Activated B cell treated with CpG ODN at 0.5 μM for 24 hours (primary cell): ENCODE measurements at regions of chr19 and their contacts with region 1.

Region 1: DNA sequence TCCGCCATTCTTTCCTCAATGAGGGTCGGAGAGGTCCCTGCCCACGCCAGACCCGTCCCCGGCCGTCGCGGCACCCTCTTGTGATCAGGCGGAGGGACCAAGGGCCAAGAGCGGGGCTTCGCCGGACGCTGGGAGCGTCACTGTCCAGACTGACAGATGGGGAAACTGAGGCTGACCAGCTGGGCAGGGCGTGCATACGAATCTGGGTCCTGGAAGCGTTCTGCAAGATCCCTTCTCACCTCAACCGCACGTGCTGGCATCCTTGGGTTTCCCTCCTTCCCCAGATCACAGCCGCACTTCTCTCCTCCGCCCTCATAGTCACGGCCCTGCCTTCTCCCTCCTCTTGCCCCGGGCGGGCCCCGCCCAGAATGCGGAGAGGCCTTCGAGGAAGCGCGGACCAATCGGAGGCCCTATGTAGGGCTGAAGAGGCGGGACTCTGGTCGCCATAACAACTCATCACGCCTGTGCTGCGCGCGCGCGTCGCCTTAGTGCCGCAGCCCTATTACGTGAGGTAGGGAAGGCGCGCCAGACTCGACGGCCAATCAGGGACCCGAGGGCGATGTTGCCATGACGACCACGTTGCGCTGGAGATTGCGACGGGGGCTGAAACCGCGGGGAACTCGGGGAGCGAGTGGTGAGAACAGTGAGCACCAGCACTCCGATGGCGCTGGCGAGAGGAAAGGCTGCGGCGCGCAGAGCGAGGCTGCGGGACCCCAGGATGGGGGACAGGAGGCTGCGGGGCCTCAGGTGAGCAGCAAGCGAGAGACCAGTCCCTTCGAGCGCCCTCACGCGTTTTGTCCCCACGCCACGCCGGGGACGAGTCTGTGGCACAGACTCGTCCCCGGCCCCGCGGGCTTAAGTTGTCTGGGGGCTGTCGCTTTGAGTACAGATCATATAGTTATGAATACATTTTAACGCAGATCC is 5.7 kb downstream of the RNF225 start:
- DNase-seq: peak; percentile 96
- ATAC-seq: peak; percentile 96
- H3K4me3 Mint-ChIP-seq: peak overlapping the region; percentile 92
- H3K27ac Mint-ChIP-seq: peak overlapping the region; percentile 90
- H3K4me1 Mint-ChIP-seq: peaks cover 12% of the 10 kb centered on the region
- H3K27me3 Mint-ChIP-seq: peaks cover 7% of the 10 kb centered on the region
- CTCF ChIP-seq: no peak

Region 2: GRCh38 chr19:57279418-57280066 is 1121.6 kb before region 1 on chr19:
- CTCF ChIA-PET with region 1: no interaction called
- POLR2A ChIA-PET with region 1: interaction called, 11 read pairs
- intact Hi-C with region 1: no loop called
- DNase-seq: peak; percentile 62
- ATAC-seq: peak; percentile 72
- H3K4me3 Mint-ChIP-seq: no peak overlapping the region
- H3K27ac Mint-ChIP-seq: no peak overlapping the region
- H3K4me1 Mint-ChIP-seq: peaks cover 44% of the 10 kb centered on the region
- H3K27me3 Mint-ChIP-seq: no peaks in the 10 kb centered on the region
- CTCF ChIP-seq: no peak

Region 3: DNA sequence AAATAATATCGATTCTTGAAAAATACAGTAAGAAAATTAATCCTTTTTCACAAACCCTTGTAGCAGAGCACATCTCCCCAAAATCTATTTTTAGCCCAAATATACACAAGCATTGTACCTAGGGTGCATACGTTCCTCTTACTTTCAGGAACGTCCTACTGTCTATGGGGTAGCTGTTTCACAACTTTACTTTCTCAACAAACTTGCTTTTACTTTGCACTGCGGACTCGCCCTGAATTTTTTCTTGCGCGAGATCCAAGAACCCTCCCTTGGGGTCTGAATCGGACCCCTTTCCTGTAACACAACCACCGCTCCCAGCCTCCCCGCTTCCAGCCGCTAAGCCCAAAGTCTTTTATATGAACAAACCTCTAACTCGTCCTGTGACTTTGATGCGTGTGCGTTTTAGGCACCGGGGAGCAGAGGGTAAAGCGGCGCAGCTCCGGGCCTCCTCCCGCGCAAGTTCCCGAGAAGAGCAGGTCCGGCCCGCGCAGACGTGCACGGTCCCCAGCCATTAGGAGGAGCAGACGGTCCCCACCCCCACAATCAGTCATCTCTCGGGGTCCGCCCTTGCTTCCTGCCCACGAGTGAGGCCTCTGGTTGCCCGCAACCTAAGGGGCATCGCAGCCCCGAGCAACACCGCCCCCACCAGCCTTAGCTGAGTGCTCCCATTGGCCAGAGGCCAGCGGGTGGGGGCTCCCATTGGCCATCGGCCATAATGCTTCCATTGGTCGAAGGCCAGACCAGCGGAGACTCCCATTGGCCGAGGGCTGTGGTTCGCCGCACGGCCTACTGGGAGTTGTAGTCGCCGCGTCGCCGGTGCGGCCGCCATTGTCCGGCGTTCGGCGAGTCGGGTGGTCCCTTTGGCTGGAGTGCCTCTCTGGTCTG is 122.8 kb before region 1 on chr19 and contains the start of gene ZNF8:
- CTCF ChIA-PET with region 1: no interaction called
- POLR2A ChIA-PET with region 1: no interaction called
- intact Hi-C with region 1: loop called (anchors 1 kb)
- DNase-seq: peak; percentile 88
- ATAC-seq: peak; percentile 98
- H3K4me3 Mint-ChIP-seq: peak within 1 kb of the TSS; percentile 91
- H3K27ac Mint-ChIP-seq: peak within 1 kb of the TSS; percentile 95
- H3K4me1 Mint-ChIP-seq: peaks cover 44% of the 10 kb centered on the region
- H3K27me3 Mint-ChIP-seq: no peaks in the 10 kb centered on the region
- CTCF ChIP-seq: no peak
- total RNA-seq, gene ZNF8: 4.7 and 5.3 TPM in 2 replicates

Region 4: GRCh38 chr19:58311345-58311865 is 89.8 kb before region 1 on chr19:
- CTCF ChIA-PET with region 1: no interaction called
- POLR2A ChIA-PET with region 1: no interaction called
- intact Hi-C with region 1: no loop called
- DNase-seq: no peak
- ATAC-seq: no peak
- H3K4me3 Mint-ChIP-seq: no peak overlapping the region
- H3K27ac Mint-ChIP-seq: no peak overlapping the region
- H3K4me1 Mint-ChIP-seq: peaks cover 16% of the 10 kb centered on the region
- H3K27me3 Mint-ChIP-seq: no peaks in the 10 kb centered on the region
- CTCF ChIP-seq: no peak

Region 5: DNA sequence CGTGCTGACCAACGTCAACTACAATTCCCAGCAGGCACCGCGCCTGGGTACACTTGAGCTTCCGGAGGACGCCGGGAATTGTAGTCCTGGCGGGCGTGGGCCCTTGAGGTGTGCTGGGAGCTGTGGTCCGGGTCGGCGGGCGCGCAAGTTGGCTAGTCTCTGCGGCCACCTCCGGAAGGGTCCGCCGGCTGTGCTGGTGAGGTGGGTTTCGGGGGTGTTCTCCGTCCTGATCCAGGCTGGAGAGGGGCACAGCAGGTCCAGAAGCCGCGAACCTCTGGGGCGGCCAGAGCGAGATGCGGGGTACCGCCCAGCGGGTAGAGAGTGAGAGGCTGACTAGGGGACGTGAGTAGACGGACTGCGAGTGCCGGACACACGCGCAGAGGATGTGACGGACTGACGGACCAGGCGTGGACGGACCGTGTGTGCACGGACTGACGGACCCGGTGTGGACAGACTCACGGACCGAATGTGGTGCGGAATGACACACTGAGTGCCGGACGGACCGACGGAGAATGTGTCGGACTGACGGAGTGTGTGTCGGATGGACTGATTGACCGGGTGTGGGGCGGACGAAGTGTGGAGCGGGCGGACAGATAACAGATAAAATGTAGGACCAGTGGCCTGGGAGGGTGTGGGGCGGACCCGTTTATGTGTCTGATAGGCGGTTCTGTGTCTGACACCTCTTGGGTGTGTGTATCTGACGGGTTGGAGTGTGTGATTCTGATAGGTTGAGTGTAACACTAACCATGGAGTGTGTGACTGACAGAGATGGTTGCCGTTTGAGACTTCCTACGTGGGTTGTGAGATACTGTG is 74.1 kb before region 1 on chr19 and contains the start of gene ZSCAN22:
- CTCF ChIA-PET with region 1: no interaction called
- POLR2A ChIA-PET with region 1: interaction called, 3 read pairs
- intact Hi-C with region 1: loop called (anchors 1 kb)
- DNase-seq: peak; percentile 82
- ATAC-seq: peak; percentile 88
- H3K4me3 Mint-ChIP-seq: no peak within 1 kb of the TSS
- H3K27ac Mint-ChIP-seq: no peak within 1 kb of the TSS
- H3K4me1 Mint-ChIP-seq: peaks cover 2% of the 10 kb centered on the region
- H3K27me3 Mint-ChIP-seq: no peaks in the 10 kb centered on the region
- CTCF ChIP-seq: no peak
- total RNA-seq, gene ZSCAN22: 4.7 and 4.8 TPM in 2 replicates

Region 6: DNA sequence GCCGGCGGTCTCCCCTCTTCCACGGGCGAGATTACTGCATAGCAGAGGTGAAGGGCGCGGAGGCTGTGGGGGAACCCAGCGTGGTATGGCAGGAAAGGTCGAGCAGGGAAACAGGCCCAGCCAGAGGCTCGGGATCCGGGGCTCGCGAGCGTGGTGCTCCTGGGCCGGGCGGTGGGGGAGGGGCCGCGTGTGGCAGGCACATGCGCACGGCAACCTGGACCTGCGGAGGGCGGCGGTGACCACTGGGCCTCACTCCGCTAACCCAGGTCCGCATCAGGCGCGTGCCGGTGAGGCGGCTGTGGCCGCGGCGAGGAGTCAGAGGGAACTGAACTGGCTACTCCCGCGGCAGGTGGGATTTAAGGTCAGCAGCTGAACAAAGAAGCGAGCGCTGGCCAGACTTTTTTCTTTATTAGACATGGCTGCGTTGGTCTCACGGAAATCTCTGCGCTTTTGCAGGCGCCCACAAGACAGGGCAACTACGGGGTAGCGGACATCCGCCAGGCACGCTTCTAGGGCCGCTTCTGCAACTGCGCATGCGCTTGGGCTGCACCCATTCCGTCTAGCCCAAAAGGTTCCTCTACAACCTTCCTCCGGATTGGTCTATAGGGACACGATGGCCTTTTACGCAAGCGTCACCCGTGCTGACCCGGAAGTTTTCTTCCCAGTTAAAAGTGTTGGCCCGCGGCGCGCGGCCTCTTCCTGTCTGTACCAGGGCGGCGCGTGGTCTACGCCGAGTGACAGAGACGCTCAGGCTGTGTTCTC is 14.4 kb before region 1 on chr19 and contains the start of gene RPS5:
- CTCF ChIA-PET with region 1: no interaction called
- POLR2A ChIA-PET with region 1: interaction called, 10 read pairs
- intact Hi-C with region 1: loop called (anchors 1 kb)
- DNase-seq: peak; percentile 85
- ATAC-seq: peak; percentile 89
- H3K4me3 Mint-ChIP-seq: peak within 1 kb of the TSS; percentile 95
- H3K27ac Mint-ChIP-seq: peak within 1 kb of the TSS; percentile 98
- H3K4me1 Mint-ChIP-seq: peaks cover 50% of the 10 kb centered on the region
- H3K27me3 Mint-ChIP-seq: no peaks in the 10 kb centered on the region
- CTCF ChIP-seq: no peak
- total RNA-seq, gene RPS5: 1,982 and 2,193 TPM in 2 replicates

Region 7: DNA sequence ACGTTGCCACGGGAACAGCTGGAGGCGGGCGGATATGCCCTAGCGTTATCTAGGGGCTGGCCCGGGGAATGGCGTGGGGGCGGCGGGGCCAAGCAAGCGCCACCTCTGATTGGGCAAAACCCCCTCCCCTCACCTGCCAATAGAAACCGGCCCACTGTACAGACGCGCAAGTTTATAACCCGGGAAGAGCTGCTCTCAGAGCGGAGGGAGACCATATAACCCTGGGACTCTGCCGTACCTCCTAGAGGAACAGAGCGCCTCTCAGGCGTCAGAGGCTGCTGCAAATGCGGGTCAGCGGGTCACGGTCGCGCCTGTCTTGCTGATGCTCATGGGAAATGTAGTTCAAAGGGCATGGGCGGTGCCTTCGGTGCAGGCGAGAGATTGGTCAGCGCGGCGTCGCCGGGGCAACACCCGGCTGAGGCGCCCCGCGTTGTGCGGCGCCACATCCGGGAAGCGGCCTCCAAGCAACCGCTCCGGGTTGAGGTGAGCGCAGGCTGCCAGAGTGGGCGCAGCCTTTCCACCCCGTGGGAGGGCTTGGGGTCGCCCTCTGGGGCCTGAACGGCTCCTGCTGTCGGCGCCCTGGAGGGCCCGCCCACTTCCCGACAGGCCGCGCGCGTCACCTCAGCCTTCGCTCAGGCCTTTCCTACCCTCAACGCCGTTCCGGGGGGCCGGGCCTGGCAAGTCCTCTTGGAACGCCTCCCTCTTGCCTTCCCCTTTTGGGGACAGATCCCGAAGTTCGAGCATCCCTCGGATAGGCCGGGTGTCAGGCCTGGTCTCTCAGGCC is 74.7 kb after region 1 on chr19 and contains the start of gene ZNF446:
- CTCF ChIA-PET with region 1: no interaction called
- POLR2A ChIA-PET with region 1: no interaction called
- intact Hi-C with region 1: loop called (anchors 1 kb)
- DNase-seq: peak; percentile 91
- ATAC-seq: peak; percentile 88
- H3K4me3 Mint-ChIP-seq: peak within 1 kb of the TSS; percentile 94
- H3K27ac Mint-ChIP-seq: peak within 1 kb of the TSS; percentile 95
- H3K4me1 Mint-ChIP-seq: peaks cover 20% of the 10 kb centered on the region
- H3K27me3 Mint-ChIP-seq: no peaks in the 10 kb centered on the region
- CTCF ChIP-seq: no peak
- total RNA-seq, gene ZNF446: 9.6 and 10.4 TPM in 2 replicates

Region 8: DNA sequence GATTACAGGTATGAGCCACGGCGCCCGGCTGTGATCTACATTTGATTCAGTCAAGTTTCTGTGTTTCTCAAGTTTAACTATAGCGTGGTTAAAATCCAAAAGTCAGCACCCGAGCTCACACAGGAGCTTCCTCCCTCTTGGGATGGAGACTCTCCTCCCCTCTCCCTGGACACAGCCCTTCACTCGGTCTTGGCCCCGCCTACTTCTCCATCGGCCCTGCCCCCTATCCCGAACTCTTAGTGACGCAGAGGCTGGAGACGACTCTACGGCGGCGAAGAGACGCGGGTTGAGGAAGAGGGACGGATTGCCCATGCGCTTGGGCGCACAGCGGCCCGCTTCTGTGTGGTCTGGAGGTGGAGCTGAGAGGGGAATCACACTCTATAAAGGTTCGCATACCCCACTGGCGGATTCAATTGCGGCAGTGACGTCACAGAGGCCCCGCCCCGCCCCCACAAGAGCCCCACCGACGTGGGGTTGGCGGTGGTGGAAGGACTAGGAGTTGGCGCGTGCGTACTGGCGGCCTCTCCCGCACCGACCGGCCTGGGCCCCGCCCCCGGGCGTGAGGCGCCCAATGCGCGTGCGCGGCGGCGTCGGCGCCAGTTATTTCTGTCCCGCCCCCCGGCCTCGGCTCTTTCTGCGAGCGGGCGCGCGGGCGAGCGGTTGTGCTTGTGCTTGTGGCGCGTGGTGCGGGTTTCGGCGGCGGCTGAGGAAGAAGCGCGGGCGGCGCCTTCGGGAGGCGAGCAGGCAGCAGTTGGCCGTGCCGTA is 142.8 kb after region 1 on chr19 and contains the start of gene TRIM28:
- CTCF ChIA-PET with region 1: no interaction called
- POLR2A ChIA-PET with region 1: no interaction called
- intact Hi-C with region 1: loop called (anchors 1 kb)
- DNase-seq: peak; percentile 100
- ATAC-seq: peak; percentile 87
- H3K4me3 Mint-ChIP-seq: peak within 1 kb of the TSS; percentile 94
- H3K27ac Mint-ChIP-seq: peak within 1 kb of the TSS; percentile 98
- H3K4me1 Mint-ChIP-seq: peaks cover 27% of the 10 kb centered on the region
- H3K27me3 Mint-ChIP-seq: peaks cover 16% of the 10 kb centered on the region
- CTCF ChIP-seq: no peak
- total RNA-seq, gene TRIM28: 380 and 407 TPM in 2 replicates